CD4-positive, alpha-beta T cell (primary cell): ENCODE measurements at regions of chr13 and their contacts with region 1.

Region 1: GRCh38 chr13:20475927-20476691 is 49.5 kb downstream of the CRYL1 start:
- DNase-seq: peak; percentile 48 to 93 (median 68)
- ATAC-seq: peak; percentile 86
- H3K4me3 ChIP-seq: peak overlapping the region; percentile 42
- H3K4me3 Mint-ChIP-seq: peak overlapping the region; percentile 86
- H3K27ac ChIP-seq: peak overlapping the region; percentile 63 to 64
- H3K27ac Mint-ChIP-seq: peak overlapping the region; percentile 99
- H3K4me1 ChIP-seq: peaks cover 33% of the 10 kb centered on the region
- H3K4me1 Mint-ChIP-seq: peaks cover 65% of the 10 kb centered on the region
- H3K27me3 ChIP-seq: no peaks in the 10 kb centered on the region
- H3K27me3 Mint-ChIP-seq: no peaks in the 10 kb centered on the region
- CTCF ChIP-seq: no peak

Region 2: GRCh38 chr13:19863323-19864023 is 612.6 kb before region 1 on chr13 and contains the start of gene ZMYM5:
- CTCF ChIA-PET with region 1: no interaction called
- POLR2A ChIA-PET with region 1: interaction called, 11 read pairs
- intact Hi-C with region 1: no loop called
- DNase-seq: peak; percentile 85 to 98 (median 93)
- ATAC-seq: peak; percentile 81
- H3K4me3 ChIP-seq: peak within 1 kb of the TSS; percentile 84
- H3K4me3 Mint-ChIP-seq: peak within 1 kb of the TSS; percentile 98
- H3K27ac ChIP-seq: peak within 1 kb of the TSS; percentile 92
- H3K27ac Mint-ChIP-seq: peak within 1 kb of the TSS; percentile 91
- H3K4me1 ChIP-seq: peaks cover 33% of the 10 kb centered on the region
- H3K4me1 Mint-ChIP-seq: peaks cover 37% of the 10 kb centered on the region
- H3K27me3 ChIP-seq: no peaks in the 10 kb centered on the region
- H3K27me3 Mint-ChIP-seq: no peaks in the 10 kb centered on the region
- CTCF ChIP-seq: no peak
- total RNA-seq, gene ZMYM5: 29.2 to 32.1 TPM

Region 3: GRCh38 chr13:20197361-20197834 is 278.7 kb before region 1 on chr13:
- CTCF ChIA-PET with region 1: interaction called, 5 read pairs
- POLR2A ChIA-PET with region 1: interaction called, 11 read pairs
- intact Hi-C with region 1: no loop called
- DNase-seq: peak in 5 of 14 experiments; percentile 19 to 76 (median 43)
- ATAC-seq: peak; percentile 69
- H3K4me3 ChIP-seq: no peak overlapping the region
- H3K4me3 Mint-ChIP-seq: no peak overlapping the region
- H3K27ac ChIP-seq: no peak overlapping the region
- H3K27ac Mint-ChIP-seq: no peak overlapping the region
- H3K4me1 ChIP-seq: peaks cover 20% of the 10 kb centered on the region
- H3K4me1 Mint-ChIP-seq: peaks cover 25% of the 10 kb centered on the region
- H3K27me3 ChIP-seq: peaks cover 37 to 51% of the 10 kb centered on the region in 2 experiments
- H3K27me3 Mint-ChIP-seq: peaks cover 43% of the 10 kb centered on the region
- CTCF ChIP-seq: peak; percentile 87

Region 4: GRCh38 chr13:20400774-20401173 is 75.3 kb before region 1 on chr13:
- CTCF ChIA-PET with region 1: no interaction called
- POLR2A ChIA-PET with region 1: no interaction called
- intact Hi-C with region 1: no loop called
- DNase-seq: no peak
- ATAC-seq: no peak
- H3K4me3 ChIP-seq: no peak overlapping the region
- H3K4me3 Mint-ChIP-seq: no peak overlapping the region
- H3K27ac ChIP-seq: no peak overlapping the region
- H3K27ac Mint-ChIP-seq: no peak overlapping the region
- H3K4me1 ChIP-seq: peaks cover 11% of the 10 kb centered on the region
- H3K4me1 Mint-ChIP-seq: peaks cover 8% of the 10 kb centered on the region
- H3K27me3 ChIP-seq: no peaks in the 10 kb centered on the region
- H3K27me3 Mint-ChIP-seq: no peaks in the 10 kb centered on the region
- CTCF ChIP-seq: no peak

Region 5: GRCh38 chr13:20411638-20412360 is 64.3 kb before region 1 on chr13:
- CTCF ChIA-PET with region 1: interaction called, 4 read pairs
- POLR2A ChIA-PET with region 1: interaction called, 26 read pairs
- intact Hi-C with region 1: loop called in 1 of 2 experiments (anchors 5 kb)
- DNase-seq: peak in 6 of 14 experiments; percentile 9 to 77 (median 44)
- ATAC-seq: peak; percentile 75
- H3K4me3 ChIP-seq: no peak overlapping the region
- H3K4me3 Mint-ChIP-seq: peak overlapping the region; percentile 61
- H3K27ac ChIP-seq: no peak overlapping the region
- H3K27ac Mint-ChIP-seq: peak overlapping the region; percentile 84
- H3K4me1 ChIP-seq: peaks cover 20% of the 10 kb centered on the region
- H3K4me1 Mint-ChIP-seq: peaks cover 22% of the 10 kb centered on the region
- H3K27me3 ChIP-seq: no peaks in the 10 kb centered on the region
- H3K27me3 Mint-ChIP-seq: no peaks in the 10 kb centered on the region
- CTCF ChIP-seq: no peak

Region 6: DNA sequence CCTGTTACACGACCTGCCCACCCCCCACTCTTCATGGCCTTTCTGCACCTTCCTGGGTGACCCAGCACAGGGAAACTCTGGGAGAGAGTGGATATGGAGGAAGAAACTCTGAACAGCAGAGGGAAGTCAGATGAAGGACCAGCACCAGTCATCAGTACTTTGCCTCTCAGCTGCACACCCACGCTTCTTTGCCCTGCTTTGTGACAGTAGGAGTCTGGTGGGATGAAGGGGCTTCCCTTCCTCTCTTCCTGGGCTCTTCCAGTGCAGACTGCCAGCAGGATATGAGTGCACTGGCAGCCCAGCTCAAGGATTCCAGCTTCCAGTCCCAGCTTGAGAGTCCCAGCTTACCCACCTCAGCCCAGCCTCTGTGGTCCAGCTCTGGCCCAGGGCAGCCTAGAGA is 19.4 kb before region 1 on chr13:
- CTCF ChIA-PET with region 1: no interaction called
- POLR2A ChIA-PET with region 1: interaction called, 14 read pairs
- intact Hi-C with region 1: no loop called
- DNase-seq: no peak
- ATAC-seq: no peak
- H3K4me3 ChIP-seq: no peak overlapping the region
- H3K4me3 Mint-ChIP-seq: no peak overlapping the region
- H3K27ac ChIP-seq: no peak overlapping the region
- H3K27ac Mint-ChIP-seq: no peak overlapping the region
- H3K4me1 ChIP-seq: peaks cover 13% of the 10 kb centered on the region
- H3K4me1 Mint-ChIP-seq: peaks cover 24% of the 10 kb centered on the region
- H3K27me3 ChIP-seq: no peaks in the 10 kb centered on the region
- H3K27me3 Mint-ChIP-seq: no peaks in the 10 kb centered on the region
- CTCF ChIP-seq: no peak

Region 7: DNA sequence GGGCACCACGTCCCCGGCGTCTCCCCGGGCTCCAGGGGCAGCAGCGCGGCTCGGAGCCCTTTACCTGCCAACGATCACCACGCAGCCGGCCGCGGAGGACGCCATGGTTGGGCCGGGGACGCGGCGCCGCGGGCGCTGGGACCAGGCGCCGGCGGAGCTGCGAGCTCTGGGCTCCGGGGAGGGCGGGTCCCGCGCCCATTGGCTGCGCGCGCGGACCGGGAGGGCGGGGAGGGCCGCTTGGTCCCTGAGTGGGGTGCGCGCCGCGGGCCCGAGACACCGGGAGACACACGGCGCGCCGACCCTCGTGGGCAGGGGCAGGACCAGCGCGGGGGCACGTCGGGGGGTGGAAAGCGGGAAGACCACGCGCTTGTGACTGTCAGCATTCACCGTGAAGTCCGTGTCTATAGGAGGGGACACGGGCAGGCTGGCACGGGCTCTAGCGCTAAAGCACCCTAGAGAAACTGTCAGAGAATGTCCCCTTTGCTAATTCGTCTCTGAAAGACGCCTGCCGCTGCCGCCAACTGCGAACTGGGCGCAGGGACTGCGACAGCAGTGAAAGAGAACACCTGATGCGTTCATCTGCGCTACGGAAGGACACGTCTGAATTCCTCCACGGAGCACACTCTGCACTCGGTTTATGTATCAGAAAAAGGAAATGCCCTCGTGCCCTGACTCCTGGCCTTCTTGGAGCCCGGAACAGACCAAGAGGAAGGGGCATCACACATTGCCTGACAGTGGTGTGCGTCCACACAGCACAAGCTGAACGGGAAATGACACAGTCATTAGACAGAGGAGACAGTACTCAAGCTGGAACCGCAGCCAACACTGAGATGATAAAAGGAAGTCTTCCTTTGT is 49.8 kb after region 1 on chr13 and contains the start of gene CRYL1:
- CTCF ChIA-PET with region 1: no interaction called
- POLR2A ChIA-PET with region 1: interaction called, 15 read pairs
- intact Hi-C with region 1: no loop called
- DNase-seq: peak; percentile 53 to 88 (median 70)
- ATAC-seq: peak; percentile 86
- H3K4me3 ChIP-seq: peak within 1 kb of the TSS; percentile 68
- H3K4me3 Mint-ChIP-seq: peak within 1 kb of the TSS; percentile 97
- H3K27ac ChIP-seq: peak within 1 kb of the TSS; percentile 59 to 66
- H3K27ac Mint-ChIP-seq: peak within 1 kb of the TSS; percentile 94
- H3K4me1 ChIP-seq: peaks cover 21% of the 10 kb centered on the region
- H3K4me1 Mint-ChIP-seq: peaks cover 28% of the 10 kb centered on the region
- H3K27me3 ChIP-seq: no peaks in the 10 kb centered on the region
- H3K27me3 Mint-ChIP-seq: peaks cover 6% of the 10 kb centered on the region
- CTCF ChIP-seq: no peak
- total RNA-seq, gene CRYL1: 7.9 to 8.0 TPM

Region 8: GRCh38 chr13:20773194-20774080 is 297.3 kb after region 1 on chr13 and contains the start of gene EEF1AKMT1:
- CTCF ChIA-PET with region 1: no interaction called
- POLR2A ChIA-PET with region 1: interaction called, 16 read pairs
- intact Hi-C with region 1: loop called in 1 of 2 experiments (anchors 2 kb)
- DNase-seq: peak; percentile 89 to 97 (median 94)
- ATAC-seq: peak; percentile 88
- H3K4me3 ChIP-seq: peak within 1 kb of the TSS; percentile 75
- H3K4me3 Mint-ChIP-seq: peak within 1 kb of the TSS; percentile 98
- H3K27ac ChIP-seq: peak within 1 kb of the TSS; percentile 90 to 92
- H3K27ac Mint-ChIP-seq: peak within 1 kb of the TSS; percentile 98
- H3K4me1 ChIP-seq: peaks cover 31% of the 10 kb centered on the region
- H3K4me1 Mint-ChIP-seq: peaks cover 40% of the 10 kb centered on the region
- H3K27me3 ChIP-seq: no peaks in the 10 kb centered on the region
- H3K27me3 Mint-ChIP-seq: no peaks in the 10 kb centered on the region
- CTCF ChIP-seq: no peak
- total RNA-seq, gene EEF1AKMT1: 1.9 to 2.5 TPM